ENCODE measurements at regions of chr4 and their contacts with region 1.

Region 1: GRCh38 chr4:99816545-99817308 is at the start of gene DAPP1:
- DNase-seq: peak; percentile 94
- ATAC-seq: peak; percentile 94
- H3K4me3 ChIP-seq: peak within 1 kb of the TSS; percentile 60 to 100 (median 91)
- H3K4me3 Mint-ChIP-seq: peak within 1 kb of the TSS; percentile 95
- H3K27ac ChIP-seq: peak within 1 kb of the TSS; percentile 77 to 95
- H3K27ac Mint-ChIP-seq: peak within 1 kb of the TSS; percentile 90
- H3K4me1 ChIP-seq: peaks cover 50 to 57% of the 10 kb centered on the region in 2 donors
- H3K4me1 Mint-ChIP-seq: peaks cover 58% of the 10 kb centered on the region
- H3K27me3 ChIP-seq: no peaks in the 10 kb centered on the region
- H3K27me3 Mint-ChIP-seq: no peaks in the 10 kb centered on the region
- CTCF ChIP-seq: no peak
- total RNA-seq, gene DAPP1: 166 and 169 TPM in 2 replicates

Region 2: DNA sequence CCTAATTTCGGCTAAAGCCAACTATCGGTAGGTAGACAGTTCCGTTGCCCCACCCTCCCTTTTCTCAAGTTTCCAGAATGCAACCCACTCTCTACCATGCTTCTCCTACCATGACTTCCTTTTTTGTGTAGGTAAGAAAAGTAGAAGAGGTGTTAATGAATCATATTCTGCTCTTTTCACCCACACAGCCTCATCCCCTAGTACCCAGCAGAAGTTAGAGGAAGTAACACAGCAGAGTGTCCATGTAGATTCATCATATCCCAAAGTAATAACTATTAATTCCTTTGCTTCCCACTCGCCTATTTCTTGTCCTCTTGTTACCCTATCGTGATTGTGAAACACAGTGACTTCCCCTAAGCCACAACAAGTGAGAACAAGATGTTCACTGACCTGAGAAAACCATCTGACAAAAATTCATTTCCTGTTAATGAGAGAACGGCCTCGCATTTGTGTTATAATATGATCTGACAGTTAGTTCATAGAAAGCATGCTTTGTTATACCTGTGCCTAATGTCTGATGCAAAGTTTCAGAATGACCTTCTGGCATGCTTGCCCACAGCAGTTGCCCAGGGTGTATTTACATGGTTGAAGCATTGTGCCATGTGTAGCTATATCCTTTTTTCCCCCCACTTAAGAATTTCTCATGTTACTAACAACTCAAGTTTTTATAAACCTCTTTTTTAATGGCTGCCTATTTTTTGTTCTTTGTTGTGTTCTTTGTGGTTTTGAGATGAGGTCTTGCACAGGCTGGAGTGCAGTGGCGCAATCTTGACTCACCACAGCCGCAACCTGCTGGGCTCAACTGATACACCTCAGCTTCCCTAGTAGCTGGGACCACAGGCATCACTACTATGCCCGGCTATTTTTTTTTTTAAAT is 1370.0 kb before region 1 on chr4:
- CTCF ChIA-PET with region 1: no interaction called
- POLR2A ChIA-PET with region 1: no interaction called
- intact Hi-C with region 1: loop called (anchors 5 kb)
- DNase-seq: peak; percentile 75
- ATAC-seq: peak; percentile 72
- H3K4me3 ChIP-seq: peak overlapping the region in 4 of 5 experiments; percentile 32 to 53 (median 48)
- H3K4me3 Mint-ChIP-seq: peak overlapping the region; percentile 75
- H3K27ac ChIP-seq: peak overlapping the region; percentile 69 to 70
- H3K27ac Mint-ChIP-seq: peak overlapping the region; percentile 93
- H3K4me1 ChIP-seq: peaks cover 35 to 42% of the 10 kb centered on the region in 2 donors
- H3K4me1 Mint-ChIP-seq: peaks cover 45% of the 10 kb centered on the region
- H3K27me3 ChIP-seq: no peaks in the 10 kb centered on the region
- H3K27me3 Mint-ChIP-seq: no peaks in the 10 kb centered on the region
- CTCF ChIP-seq: no peak

Region 3: GRCh38 chr4:99088481-99089365 is 728.0 kb before region 1 on chr4 and contains the start of gene ADH5:
- CTCF ChIA-PET with region 1: no interaction called
- POLR2A ChIA-PET with region 1: no interaction called
- intact Hi-C with region 1: loop called (anchors 2 kb)
- DNase-seq: peak; percentile 90
- ATAC-seq: peak; percentile 95
- H3K4me3 ChIP-seq: peak within 1 kb of the TSS; percentile 75 to 99 (median 96)
- H3K4me3 Mint-ChIP-seq: peak within 1 kb of the TSS; percentile 98
- H3K27ac ChIP-seq: peak within 1 kb of the TSS; percentile 84
- H3K27ac Mint-ChIP-seq: peak within 1 kb of the TSS; percentile 98
- H3K4me1 ChIP-seq: peaks cover 15 to 25% of the 10 kb centered on the region in 2 donors
- H3K4me1 Mint-ChIP-seq: peaks cover 46% of the 10 kb centered on the region
- H3K27me3 ChIP-seq: no peaks in the 10 kb centered on the region
- H3K27me3 Mint-ChIP-seq: no peaks in the 10 kb centered on the region
- CTCF ChIP-seq: no peak
- total RNA-seq, gene ADH5: 59.2 and 65.6 TPM in 2 replicates

Region 4: DNA sequence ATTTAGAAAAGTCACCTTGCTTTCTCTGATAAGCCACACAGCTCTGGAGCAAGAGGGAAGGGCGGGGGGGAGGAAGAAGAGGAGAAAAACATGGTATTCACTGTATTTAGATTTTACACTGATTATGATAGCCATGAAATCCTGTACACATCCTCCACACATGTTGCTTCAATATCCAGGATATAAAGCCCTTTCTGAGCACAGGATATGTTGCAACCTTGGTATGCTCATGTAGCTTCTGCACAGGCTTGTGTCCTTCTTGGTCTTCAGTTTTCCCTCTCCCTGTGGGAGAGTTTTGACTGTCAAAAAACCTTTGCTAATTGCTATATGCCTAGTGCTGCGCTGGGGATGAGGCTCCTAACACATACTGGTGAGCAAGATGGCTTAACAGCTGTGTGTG is 62.0 kb before region 1 on chr4:
- CTCF ChIA-PET with region 1: no interaction called
- POLR2A ChIA-PET with region 1: no interaction called
- intact Hi-C with region 1: no loop called
- DNase-seq: no peak
- ATAC-seq: no peak
- H3K4me3 ChIP-seq: no peak overlapping the region
- H3K4me3 Mint-ChIP-seq: no peak overlapping the region
- H3K27ac ChIP-seq: no peak overlapping the region
- H3K27ac Mint-ChIP-seq: no peak overlapping the region
- H3K4me1 ChIP-seq: no peaks in the 10 kb centered on the region
- H3K4me1 Mint-ChIP-seq: no peaks in the 10 kb centered on the region
- H3K27me3 ChIP-seq: peaks cover 0 to 5% (median 0%) of the 10 kb centered on the region in 4 experiments
- H3K27me3 Mint-ChIP-seq: peaks cover 10% of the 10 kb centered on the region
- CTCF ChIP-seq: no peak

Region 5: GRCh38 chr4:99847362-99847976 is 30.7 kb after region 1 on chr4:
- CTCF ChIA-PET with region 1: interaction called, 34 read pairs
- POLR2A ChIA-PET with region 1: interaction called, 13 read pairs
- intact Hi-C with region 1: loop called (anchors 1 kb)
- DNase-seq: peak; percentile 79
- ATAC-seq: peak; percentile 81
- H3K4me3 ChIP-seq: no peak overlapping the region
- H3K4me3 Mint-ChIP-seq: peak overlapping the region; percentile 72
- H3K27ac ChIP-seq: peak overlapping the region; percentile 3 to 56
- H3K27ac Mint-ChIP-seq: peak overlapping the region; percentile 84
- H3K4me1 ChIP-seq: peaks cover 31 to 38% of the 10 kb centered on the region in 2 donors
- H3K4me1 Mint-ChIP-seq: peaks cover 68% of the 10 kb centered on the region
- H3K27me3 ChIP-seq: no peaks in the 10 kb centered on the region
- H3K27me3 Mint-ChIP-seq: no peaks in the 10 kb centered on the region
- CTCF ChIP-seq: no peak

Region 6: DNA sequence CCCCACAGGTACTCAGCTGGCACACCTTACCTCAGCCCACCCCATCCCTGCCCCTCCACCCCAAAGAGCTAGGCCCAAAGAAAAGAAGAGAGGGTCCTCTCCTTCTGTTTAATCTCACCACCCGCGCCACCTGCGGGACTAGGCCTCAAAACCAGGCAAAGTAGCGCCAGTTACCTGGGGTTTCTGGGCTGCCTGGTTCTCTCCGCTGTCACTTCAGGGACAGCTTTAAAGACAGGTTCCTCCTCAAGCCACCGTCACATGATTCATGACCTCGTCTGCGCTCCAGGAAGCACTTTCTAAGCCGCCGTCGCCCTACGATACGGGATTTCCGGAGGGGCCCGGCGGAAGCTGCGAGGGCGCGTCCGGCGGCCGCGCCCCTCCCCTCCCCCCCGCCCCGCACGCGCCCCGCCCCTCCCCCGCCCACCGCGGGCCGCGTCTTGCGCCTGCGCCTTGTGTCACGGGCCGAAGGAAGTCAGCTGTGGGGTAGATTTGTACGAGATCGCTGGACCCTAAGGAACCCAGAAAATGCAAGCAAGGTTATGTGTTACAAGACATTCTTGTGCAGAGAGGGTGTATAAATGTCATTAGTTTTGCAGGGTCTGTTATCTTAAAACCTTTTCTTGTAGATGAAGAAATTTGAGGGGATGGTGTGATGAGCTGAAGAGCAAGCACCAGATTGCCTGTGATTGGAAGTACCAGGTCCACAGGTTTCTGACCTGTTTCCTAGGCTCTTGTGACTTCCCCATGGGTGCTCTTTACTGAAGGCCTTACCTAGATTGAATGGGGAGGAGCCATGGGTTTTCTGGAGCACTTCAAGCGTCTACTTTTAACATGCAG is 77.7 kb after region 1 on chr4 and contains the start of gene LAMTOR3:
- CTCF ChIA-PET with region 1: interaction called, 8 read pairs
- POLR2A ChIA-PET with region 1: interaction called, 6 read pairs
- intact Hi-C with region 1: loop called (anchors 1 kb)
- DNase-seq: peak; percentile 95
- ATAC-seq: peak; percentile 97
- H3K4me3 ChIP-seq: peak within 1 kb of the TSS; percentile 32 to 94 (median 79)
- H3K4me3 Mint-ChIP-seq: peak within 1 kb of the TSS; percentile 98
- H3K27ac ChIP-seq: peak within 1 kb of the TSS; percentile 74 to 97
- H3K27ac Mint-ChIP-seq: peak within 1 kb of the TSS; percentile 95
- H3K4me1 ChIP-seq: peaks cover 14 to 18% of the 10 kb centered on the region in 2 donors
- H3K4me1 Mint-ChIP-seq: peaks cover 32% of the 10 kb centered on the region
- H3K27me3 ChIP-seq: no peaks in the 10 kb centered on the region
- H3K27me3 Mint-ChIP-seq: no peaks in the 10 kb centered on the region
- CTCF ChIP-seq: no peak
- total RNA-seq, gene LAMTOR3: 18.0 and 20.1 TPM in 2 replicates

Region 7: GRCh38 chr4:101081695-101082369 is 1265.1 kb after region 1 on chr4:
- CTCF ChIA-PET with region 1: no interaction called
- POLR2A ChIA-PET with region 1: no interaction called
- intact Hi-C with region 1: loop called (anchors 5 kb)
- DNase-seq: no peak
- ATAC-seq: no peak
- H3K4me3 ChIP-seq: no peak overlapping the region
- H3K4me3 Mint-ChIP-seq: no peak overlapping the region
- H3K27ac ChIP-seq: peak overlapping the region in 1 of 2 donors; percentile 13
- H3K27ac Mint-ChIP-seq: no peak overlapping the region
- H3K4me1 ChIP-seq: peaks cover 22 to 30% of the 10 kb centered on the region in 2 donors
- H3K4me1 Mint-ChIP-seq: peaks cover 43% of the 10 kb centered on the region
- H3K27me3 ChIP-seq: no peaks in the 10 kb centered on the region
- H3K27me3 Mint-ChIP-seq: no peaks in the 10 kb centered on the region
- CTCF ChIP-seq: no peak